ENCODE measurements at regions of chr9 and their contacts with region 1.

Region 1: DNA sequence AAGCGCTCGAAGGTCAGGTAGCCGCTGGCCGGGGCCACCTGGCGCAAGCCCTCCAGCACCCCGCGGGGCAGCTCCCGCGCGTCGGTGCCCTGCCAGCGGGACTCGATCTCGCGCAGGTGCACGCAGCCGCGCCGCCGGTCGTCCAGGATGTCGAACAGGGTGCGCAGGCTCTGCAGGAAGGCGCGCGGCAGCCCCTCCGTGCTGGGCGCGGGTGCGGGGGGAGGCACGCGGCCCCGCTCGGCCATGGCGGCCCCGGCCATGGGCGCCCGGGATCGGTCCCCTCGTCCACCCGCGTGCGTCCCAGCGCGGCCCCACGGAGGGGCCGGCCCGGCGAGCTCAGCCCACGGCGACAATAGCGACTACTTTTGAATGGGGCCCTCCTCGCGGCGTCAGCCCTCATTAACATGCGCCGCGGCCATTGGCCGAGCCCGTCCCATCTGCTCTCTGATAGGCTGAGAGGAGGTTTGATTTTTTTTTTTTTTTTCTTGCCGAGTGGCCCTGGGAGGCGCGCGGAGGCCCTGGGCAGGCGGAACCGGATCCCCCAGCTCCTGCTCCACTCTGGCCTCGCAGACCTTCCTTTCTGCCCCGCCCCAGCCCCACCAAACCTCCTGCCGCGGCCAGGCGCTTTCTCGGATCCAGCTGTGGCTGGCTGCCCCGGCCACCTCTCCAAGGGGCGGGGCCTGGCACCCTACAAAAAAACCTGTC is at the start of gene SAPCD2:
- DNase-seq: peak; percentile 88
- ATAC-seq: peak; percentile 84
- H3K4me3 Mint-ChIP-seq: peak within 1 kb of the TSS; percentile 71
- H3K27ac Mint-ChIP-seq: peak within 1 kb of the TSS; percentile 95
- H3K4me1 Mint-ChIP-seq: peaks cover 34% of the 10 kb centered on the region
- H3K27me3 Mint-ChIP-seq: no peaks in the 10 kb centered on the region
- CTCF ChIP-seq: no peak
- total RNA-seq, gene SAPCD2: 52.0 to 67.0 TPM (median 53.6 TPM) in 3 replicates

Region 2: DNA sequence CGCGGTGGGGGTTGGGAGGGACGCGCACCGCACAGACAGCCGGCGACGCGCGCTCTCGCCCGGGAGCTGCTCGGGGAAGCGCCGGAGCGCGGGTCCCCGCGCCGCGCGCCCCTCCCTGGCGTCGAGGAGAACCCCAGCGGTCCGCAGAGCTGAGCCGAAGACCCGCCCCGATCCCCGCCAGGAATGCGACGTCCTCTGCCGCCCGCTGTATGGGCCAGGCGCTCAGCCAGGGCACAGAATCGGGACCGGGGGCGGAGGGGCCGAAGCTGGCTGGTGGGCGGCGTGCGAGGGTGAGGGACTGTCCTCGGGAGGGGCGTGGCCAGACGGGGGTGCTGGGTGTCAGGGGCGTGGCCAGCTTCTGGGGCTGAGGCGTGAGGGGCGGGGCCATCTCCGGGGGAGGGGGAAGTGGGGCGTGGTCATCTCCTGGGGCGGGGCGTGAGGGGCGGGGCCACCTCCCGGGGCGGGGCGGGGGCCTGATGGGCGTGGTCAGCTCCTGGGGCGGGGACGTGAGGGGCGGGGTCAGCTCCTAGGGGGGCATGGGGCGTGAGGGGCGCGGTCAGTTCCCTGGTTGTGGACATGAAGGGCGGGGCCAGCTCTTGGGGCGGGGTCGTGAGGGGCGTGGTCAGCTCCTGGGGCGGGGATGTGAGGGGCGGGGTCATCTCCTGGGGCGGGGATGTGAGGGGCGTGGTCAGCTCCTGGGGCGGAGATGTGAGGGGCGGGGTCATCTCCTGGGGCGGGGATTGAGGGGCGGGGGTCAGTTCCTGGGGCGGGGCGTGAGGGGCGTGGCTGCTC is 92.1 kb before region 1 on chr9:
- CTCF ChIA-PET with region 1: interaction called, 18 read pairs
- POLR2A ChIA-PET with region 1: interaction called, 3 read pairs
- DNase-seq: peak; percentile 96
- ATAC-seq: peak; percentile 76
- H3K4me3 Mint-ChIP-seq: peak overlapping the region; percentile 66
- H3K27ac Mint-ChIP-seq: no peak overlapping the region
- H3K4me1 Mint-ChIP-seq: peaks cover 3% of the 10 kb centered on the region; the same call in 1 of the 2 replicates
- H3K27me3 Mint-ChIP-seq: peaks cover 3% of the 10 kb centered on the region; the same call in 1 of the 2 replicates
- CTCF ChIP-seq: no peak

Region 3: DNA sequence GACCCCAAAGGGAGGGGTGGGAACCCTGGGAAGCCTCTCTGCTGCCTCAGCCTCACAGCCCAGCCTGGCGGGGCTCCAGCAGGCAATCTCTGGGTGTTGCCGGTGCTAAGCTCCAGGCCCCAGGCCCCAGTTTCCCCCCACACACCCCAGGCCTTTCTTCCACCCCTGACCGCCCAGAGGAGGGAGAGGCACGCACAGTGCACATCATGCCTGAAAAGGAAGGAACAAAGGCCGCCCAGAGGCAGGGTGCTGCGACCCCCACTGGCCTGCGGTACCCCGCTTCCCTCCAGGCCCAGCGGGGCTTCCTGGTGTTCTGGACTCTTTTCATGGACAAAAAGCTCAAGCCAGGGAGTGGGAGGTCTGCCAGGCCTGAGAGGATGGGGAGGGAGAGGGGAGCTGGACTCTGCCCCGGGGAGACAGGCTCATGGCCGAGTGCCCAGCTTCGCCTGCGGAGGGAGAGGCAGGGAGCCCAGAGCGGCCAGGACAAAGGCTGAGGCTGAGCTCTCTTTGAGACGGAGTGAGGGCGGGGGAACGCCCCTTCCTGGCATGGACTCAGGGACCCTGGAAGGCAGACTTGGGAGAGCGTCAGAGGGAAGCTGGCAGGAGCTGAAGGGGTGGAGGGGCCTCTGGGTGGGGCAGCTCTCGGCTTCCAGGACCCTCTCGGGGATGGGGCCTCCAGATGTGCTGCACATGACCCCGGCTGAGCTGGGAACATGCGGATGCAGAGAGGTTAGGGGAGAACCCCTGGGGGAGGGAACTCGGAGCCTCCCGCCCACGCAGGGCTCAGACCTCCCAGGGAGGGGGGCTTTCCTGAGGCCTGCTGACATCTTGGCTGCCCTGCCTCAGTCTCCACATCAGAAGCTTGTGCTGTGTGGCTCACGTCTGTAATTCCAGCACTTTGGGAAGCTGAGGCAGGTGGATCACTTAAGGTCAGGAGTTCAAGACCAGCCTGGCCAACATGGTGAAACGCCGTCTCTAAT is 14.7 kb before region 1 on chr9:
- CTCF ChIA-PET with region 1: interaction called, 240 read pairs
- POLR2A ChIA-PET with region 1: no interaction called
- DNase-seq: no peak
- ATAC-seq: no peak
- H3K4me3 Mint-ChIP-seq: no peak overlapping the region
- H3K27ac Mint-ChIP-seq: no peak overlapping the region
- H3K4me1 Mint-ChIP-seq: 0 out of 2 replicates have a peak, but pooled peaks cover 2% of the 10 kb centered on the region
- H3K27me3 Mint-ChIP-seq: peaks cover 24% of the 10 kb centered on the region
- CTCF ChIP-seq: no peak

Region 4: GRCh38 chr9:137129456-137130175 is 59.3 kb after region 1 on chr9:
- CTCF ChIA-PET with region 1: interaction called, 10 read pairs
- POLR2A ChIA-PET with region 1: no interaction called
- DNase-seq: peak; percentile 87
- ATAC-seq: peak; percentile 96
- H3K4me3 Mint-ChIP-seq: peak overlapping the region; percentile 78
- H3K27ac Mint-ChIP-seq: no peak overlapping the region
- H3K4me1 Mint-ChIP-seq: peaks cover 14% of the 10 kb centered on the region
- H3K27me3 Mint-ChIP-seq: peaks cover 23% of the 10 kb centered on the region
- CTCF ChIP-seq: no peak

Region 5: DNA sequence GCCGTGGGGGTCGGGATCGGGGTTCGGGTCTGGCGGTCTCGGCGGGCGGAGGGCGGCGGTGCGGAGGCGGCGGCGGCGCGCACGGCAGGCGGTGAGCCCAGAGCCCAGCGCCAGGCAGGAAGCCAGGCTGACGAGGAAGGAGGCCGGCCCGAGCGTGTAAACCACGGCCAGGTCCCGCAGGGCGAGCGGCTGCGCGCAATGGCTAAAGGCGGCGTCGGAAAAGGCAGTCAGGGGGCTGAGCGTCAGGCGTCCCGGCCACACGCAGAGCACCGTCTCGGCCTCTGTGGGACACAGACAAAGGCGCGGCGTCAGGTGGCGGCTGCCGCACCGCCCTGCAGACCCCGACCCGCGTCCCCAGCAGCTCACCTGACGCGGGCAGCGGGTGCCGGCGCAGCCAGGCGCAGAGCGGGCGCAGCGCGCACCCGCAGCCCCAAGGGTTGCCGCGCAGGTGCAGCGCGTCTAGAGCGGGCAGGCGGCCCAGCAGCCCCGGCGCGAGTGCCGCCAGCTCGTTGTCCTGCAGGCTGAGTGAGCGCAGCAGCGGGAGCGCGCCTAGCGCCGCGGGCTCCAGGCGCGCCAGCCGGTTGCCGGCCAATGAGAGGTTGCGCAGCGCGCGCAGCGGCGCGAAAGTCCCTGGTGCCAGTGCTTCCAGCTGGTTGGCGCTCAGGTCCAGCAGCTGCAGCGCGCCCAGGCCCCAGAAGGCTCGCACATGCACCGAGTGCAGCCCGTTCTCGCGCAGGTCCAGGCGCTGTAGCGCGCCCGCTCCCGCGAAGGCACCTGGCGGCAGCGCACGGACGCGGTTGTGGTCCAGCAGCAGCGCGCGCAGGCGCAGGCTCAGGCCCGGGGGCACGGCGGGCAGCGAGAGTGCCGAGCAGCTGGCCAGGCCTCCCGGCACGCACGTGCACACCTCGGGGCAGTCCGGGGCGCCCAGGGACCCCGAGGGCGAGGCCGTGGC is 98.8 kb after region 1 on chr9:
- CTCF ChIA-PET with region 1: interaction called, 18 read pairs
- POLR2A ChIA-PET with region 1: no interaction called
- DNase-seq: peak; percentile 81
- ATAC-seq: peak; percentile 61
- H3K4me3 Mint-ChIP-seq: peak overlapping the region; percentile 62
- H3K27ac Mint-ChIP-seq: no peak overlapping the region
- H3K4me1 Mint-ChIP-seq: peaks cover 6% of the 10 kb centered on the region
- H3K27me3 Mint-ChIP-seq: peaks cover 64% of the 10 kb centered on the region
- CTCF ChIP-seq: no peak

Region 6: GRCh38 chr9:137223078-137223970 is 153.0 kb after region 1 on chr9:
- CTCF ChIA-PET with region 1: interaction called, 16 read pairs
- POLR2A ChIA-PET with region 1: no interaction called
- DNase-seq: peak; percentile 97
- ATAC-seq: peak; percentile 73
- H3K4me3 Mint-ChIP-seq: peak overlapping the region; percentile 77
- H3K27ac Mint-ChIP-seq: no peak overlapping the region
- H3K4me1 Mint-ChIP-seq: peaks cover 3% of the 10 kb centered on the region
- H3K27me3 Mint-ChIP-seq: no peaks in the 10 kb centered on the region
- CTCF ChIP-seq: no peak

Measured in WTC11 (cell line).